ENCODE measurements at regions of chr15 and their contacts with region 1.

Region 1: GRCh38 chr15:38414357-38414756 is 39.6 kb upstream of the FAM98B start:
- DNase-seq: peak; percentile 55 to 69
- ATAC-seq: peak in 1 of 4 donors; percentile 64
- H3K4me3 ChIP-seq: no peak overlapping the region
- H3K27ac ChIP-seq: no peak overlapping the region
- H3K4me1 ChIP-seq: no peaks in the 10 kb centered on the region
- H3K27me3 ChIP-seq: peaks cover 0 to 2% (median 0%) of the 10 kb centered on the region in 3 donors
- CTCF ChIP-seq: peak; percentile 41

Region 2: DNA sequence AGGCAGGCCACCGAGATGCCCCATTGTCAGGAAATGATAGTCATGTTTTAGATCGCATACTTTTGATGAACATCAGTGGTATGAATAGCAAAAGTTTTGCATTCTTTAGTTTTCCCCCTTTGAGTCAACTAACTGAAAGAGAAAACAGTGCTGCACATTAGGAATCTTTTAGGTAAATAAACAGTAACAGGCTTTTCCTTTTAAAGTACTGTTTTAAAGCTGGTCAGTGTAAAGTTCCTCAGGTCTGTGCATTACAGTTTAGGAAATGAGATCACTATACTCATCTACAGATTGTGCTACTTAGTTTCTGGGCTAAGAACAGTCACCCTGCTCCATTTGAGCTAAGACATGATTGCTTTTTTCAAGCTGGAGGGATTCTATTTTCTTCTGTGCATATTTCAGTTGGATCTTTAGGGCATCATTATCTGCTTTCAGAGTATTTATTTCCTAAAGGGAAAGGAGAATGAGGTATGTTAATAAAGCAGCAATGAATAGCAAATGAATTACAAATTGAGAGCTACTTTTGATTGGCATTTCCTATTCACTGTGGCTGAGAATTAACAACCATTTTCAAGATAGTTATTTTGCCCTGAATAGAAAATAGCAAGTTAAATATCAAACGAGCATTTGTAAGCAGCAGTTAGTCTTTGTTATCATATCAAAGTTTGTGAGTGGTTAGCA is 76.0 kb after region 1 on chr15:
- intact Hi-C with region 1: loop called in 1 of 2 experiments (anchors 5 kb)
- DNase-seq: no peak
- ATAC-seq: no peak
- H3K4me3 ChIP-seq: no peak overlapping the region
- H3K27ac ChIP-seq: no peak overlapping the region
- H3K4me1 ChIP-seq: no peaks in the 10 kb centered on the region
- H3K27me3 ChIP-seq: no peaks in the 10 kb centered on the region
- CTCF ChIP-seq: no peak